ENCODE measurements at regions of chr15 and their contacts with region 1.

Region 1: DNA sequence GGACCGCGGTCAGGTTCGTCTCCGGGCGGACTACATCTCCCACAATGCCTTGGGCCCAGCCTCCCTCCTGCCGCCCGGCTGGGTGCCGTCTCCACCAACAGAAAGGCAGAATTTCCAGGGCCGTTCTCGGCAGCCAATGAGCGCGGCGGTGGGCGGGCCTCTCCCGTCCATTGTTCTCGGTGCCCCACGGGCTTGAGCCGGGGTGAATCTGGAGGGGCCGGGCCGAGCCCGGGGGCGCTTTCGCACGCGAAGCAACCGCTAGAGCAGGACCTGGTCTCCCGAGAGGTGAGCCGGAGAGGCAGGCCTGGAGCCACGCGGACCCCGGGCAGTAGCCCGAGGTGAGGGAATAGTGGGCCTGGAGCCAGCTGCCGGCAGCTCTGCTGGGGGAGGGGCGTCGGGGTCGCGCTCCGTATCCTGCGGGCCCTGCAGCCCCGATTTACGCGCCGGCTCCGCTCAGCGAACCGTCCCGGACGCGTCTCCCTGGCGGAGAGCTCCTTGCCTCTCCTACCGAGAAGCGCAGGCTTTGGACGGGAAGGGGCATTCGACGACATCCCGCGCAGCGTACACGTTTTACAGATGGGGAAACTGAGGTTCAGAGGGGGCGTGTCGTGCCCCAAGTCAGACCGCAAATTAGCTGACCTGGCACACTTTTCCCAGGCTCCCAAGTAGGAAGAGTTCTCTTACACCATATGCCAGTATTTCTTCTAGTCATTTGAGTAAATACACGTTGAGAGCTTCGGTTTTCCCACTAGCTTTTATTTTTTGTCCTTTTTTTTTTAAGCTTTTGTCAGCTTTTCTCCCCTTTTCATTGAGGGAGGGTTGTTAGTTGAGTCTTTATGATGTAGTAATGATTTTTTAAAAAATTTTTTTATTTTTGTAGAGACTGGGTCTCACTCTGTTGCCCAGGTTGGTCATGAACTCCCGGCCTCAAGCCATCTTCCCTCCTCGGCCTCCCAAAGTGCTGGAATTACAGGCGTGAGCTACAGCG is at the start of gene ZSCAN2:
- DNase-seq: peak; percentile 66
- ATAC-seq: peak; percentile 93
- H3K4me3 ChIP-seq: peak within 1 kb of the TSS; percentile 90
- H3K27ac ChIP-seq: peak within 1 kb of the TSS; percentile 27
- H3K4me1 ChIP-seq: peaks cover 42% of the 10 kb centered on the region
- H3K27me3 ChIP-seq: no peaks in the 10 kb centered on the region
- CTCF ChIP-seq: no peak
- EP300 ChIP-seq: peak in 1 of 2 experiments; percentile 32; a peak in 1 of 4 replicates
- POLR2A ChIP-seq: peak; percentile 71
- RAD21 ChIP-seq: no peak
- polyA plus RNA-seq, gene ZSCAN2: 2.7 to 3.0 TPM

Region 2: GRCh38 chr15:84588053-84588874 is 12.9 kb before region 1 on chr15:
- CTCF ChIA-PET with region 1: interaction called, 39 read pairs
- POLR2A ChIA-PET with region 1: no interaction called
- RAD21 ChIA-PET with region 1: interaction called, 5 read pairs
- SMC1A ChIA-PET with region 1: interaction called, 8 read pairs
- in situ Hi-C with region 1: no loop called
- intact Hi-C with region 1: no loop called
- DNase-seq: no peak
- ATAC-seq: peak; percentile 100
- H3K4me3 ChIP-seq: no peak overlapping the region; the same call in 1 of the 2 replicates
- H3K27ac ChIP-seq: no peak overlapping the region
- H3K4me1 ChIP-seq: no peaks in the 10 kb centered on the region
- H3K27me3 ChIP-seq: no peaks in the 10 kb centered on the region; a peak in 2 of 4 replicates
- CTCF ChIP-seq: peak; percentile 43 to 88 (median 72)
- EP300 ChIP-seq: no peak
- POLR2A ChIP-seq: no peak
- RAD21 ChIP-seq: peak; percentile 80

Region 3: DNA sequence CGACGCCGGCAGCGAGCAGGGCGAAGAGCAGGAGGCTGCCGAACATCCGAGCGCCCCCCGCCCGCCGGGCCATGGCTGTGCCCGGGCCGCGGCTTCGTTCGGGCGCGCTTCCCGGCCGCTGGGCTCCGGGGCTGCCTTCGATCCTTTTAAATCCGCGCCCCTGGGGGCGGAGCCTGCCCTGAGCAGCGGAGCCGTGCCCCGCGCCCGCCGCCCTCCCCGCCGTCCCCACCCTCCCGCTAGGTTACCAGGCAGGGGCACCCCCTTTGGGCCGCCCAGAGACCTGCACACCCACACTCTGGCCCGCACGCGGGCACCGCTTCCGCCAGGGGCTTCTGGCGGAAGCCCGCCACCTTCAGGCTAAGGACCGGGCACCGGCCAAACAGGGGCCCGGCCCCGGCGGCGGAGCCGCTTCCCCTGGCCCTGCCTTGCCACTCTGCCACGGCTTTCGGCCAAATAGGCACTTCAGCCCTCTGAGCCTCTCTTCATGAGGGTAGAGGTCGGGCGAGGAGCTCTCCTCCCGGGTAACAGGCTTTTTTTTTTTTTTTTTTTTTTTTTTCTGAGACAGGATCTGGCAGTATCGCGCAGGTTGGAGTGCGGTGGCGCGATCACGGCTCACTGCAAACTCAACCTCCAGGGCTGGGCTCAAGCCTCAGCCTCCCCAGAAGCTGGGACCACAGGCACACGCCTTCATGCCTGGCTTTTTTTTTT is 57.1 kb after region 1 on chr15 and contains the start of gene NMB:
- CTCF ChIA-PET with region 1: interaction called, 52 read pairs
- POLR2A ChIA-PET with region 1: interaction called, 6 read pairs
- RAD21 ChIA-PET with region 1: interaction called, 14 read pairs
- SMC1A ChIA-PET with region 1: interaction called, 8 read pairs
- in situ Hi-C with region 1: no loop called
- intact Hi-C with region 1: loop called (anchors 5 kb)
- DNase-seq: peak; percentile 33
- ATAC-seq: peak; percentile 81
- H3K4me3 ChIP-seq: peak within 1 kb of the TSS; percentile 49; the same call in 1 of the 2 replicates
- H3K27ac ChIP-seq: no peak within 1 kb of the TSS
- H3K4me1 ChIP-seq: peaks cover 19% of the 10 kb centered on the region
- H3K27me3 ChIP-seq: no peaks in the 10 kb centered on the region
- CTCF ChIP-seq: peak; percentile 56 to 66 (median 61)
- EP300 ChIP-seq: no peak
- POLR2A ChIP-seq: no peak
- RAD21 ChIP-seq: peak; percentile 29; the same call in 1 of the 2 replicates
- polyA plus RNA-seq, gene NMB: 0.32 to 0.91 TPM

Region 4: DNA sequence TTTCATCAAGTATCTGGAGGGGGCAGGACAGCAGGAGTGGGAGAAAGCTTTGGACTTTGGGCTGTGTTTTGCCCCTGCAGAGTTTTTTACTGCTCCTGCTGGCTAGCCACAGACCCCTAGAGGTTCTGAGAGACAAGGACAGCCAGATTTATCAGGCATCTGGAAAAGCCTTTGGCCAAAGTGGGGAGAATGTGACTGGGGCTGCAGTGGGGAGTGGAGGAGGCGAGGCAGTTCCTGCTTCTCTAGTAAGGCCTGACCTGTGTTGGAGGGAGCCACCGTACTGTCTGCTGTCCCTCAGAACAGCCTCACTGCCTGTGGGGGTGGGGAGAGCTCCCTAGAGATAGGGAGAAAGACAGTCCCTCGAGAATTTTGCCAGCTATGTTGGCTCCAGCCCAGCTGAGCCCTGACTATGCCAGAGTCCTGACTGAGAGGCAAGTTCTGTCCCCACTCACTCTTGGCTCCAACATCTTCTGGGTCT is 218.2 kb after region 1 on chr15:
- CTCF ChIA-PET with region 1: interaction called, 28 read pairs
- POLR2A ChIA-PET with region 1: no interaction called
- RAD21 ChIA-PET with region 1: interaction called, 8 read pairs
- SMC1A ChIA-PET with region 1: interaction called, 15 read pairs
- in situ Hi-C with region 1: no loop called
- intact Hi-C with region 1: no loop called
- DNase-seq: no peak
- ATAC-seq: 0 out of 3 replicates have a peak, but pooled peaks have one; percentile 12
- H3K4me3 ChIP-seq: no peak overlapping the region
- H3K27ac ChIP-seq: no peak overlapping the region
- H3K4me1 ChIP-seq: no peaks in the 10 kb centered on the region
- H3K27me3 ChIP-seq: no peaks in the 10 kb centered on the region; a peak in 1 of 4 replicates
- CTCF ChIP-seq: no peak
- EP300 ChIP-seq: no peak
- POLR2A ChIP-seq: no peak
- RAD21 ChIP-seq: no peak

Region 5: GRCh38 chr15:84874981-84875699 is 274.0 kb after region 1 on chr15:
- CTCF ChIA-PET with region 1: interaction called, 37 read pairs
- POLR2A ChIA-PET with region 1: interaction called, 5 read pairs
- RAD21 ChIA-PET with region 1: interaction called, 12 read pairs
- SMC1A ChIA-PET with region 1: interaction called, 13 read pairs
- in situ Hi-C with region 1: no loop called
- intact Hi-C with region 1: no loop called
- DNase-seq: no peak
- ATAC-seq: no peak
- H3K4me3 ChIP-seq: no peak overlapping the region
- H3K27ac ChIP-seq: no peak overlapping the region
- H3K4me1 ChIP-seq: no peaks in the 10 kb centered on the region
- H3K27me3 ChIP-seq: no peaks in the 10 kb centered on the region; a peak in 1 of 4 replicates
- CTCF ChIP-seq: no peak
- EP300 ChIP-seq: no peak
- POLR2A ChIP-seq: no peak
- RAD21 ChIP-seq: no peak

Region 6: DNA sequence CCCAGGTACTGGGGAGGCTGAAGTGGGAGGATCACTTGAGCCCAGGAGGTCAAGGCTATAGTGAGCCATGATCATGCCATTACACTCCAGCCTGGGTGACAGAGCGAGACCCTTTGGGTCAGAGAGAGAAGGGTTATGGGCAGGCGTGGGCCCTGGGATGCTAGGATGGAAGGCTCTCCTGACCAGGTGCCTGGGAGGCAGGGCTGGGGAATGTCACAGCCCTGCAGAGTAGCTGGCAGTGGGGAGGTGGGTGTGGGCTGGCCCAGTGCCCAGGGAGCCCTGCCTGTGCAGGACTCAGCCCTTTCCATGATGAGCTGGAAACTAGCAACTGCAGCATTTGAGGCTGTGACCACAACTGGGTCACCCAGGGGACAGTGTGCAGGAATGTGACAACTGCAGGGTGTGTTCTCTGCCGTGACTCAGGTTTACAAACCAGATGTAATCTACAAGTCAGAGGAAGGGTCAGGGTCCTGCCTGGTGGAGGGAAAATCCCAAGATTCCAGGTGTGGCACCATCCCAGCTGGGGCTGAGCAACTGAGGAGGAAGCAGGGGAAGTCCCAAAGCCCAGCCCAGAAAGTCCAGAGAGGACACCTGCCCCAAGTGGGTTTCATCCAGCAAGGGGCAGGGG is 328.7 kb after region 1 on chr15:
- CTCF ChIA-PET with region 1: interaction called, 14 read pairs
- POLR2A ChIA-PET with region 1: no interaction called
- RAD21 ChIA-PET with region 1: interaction called, 15 read pairs
- SMC1A ChIA-PET with region 1: interaction called, 7 read pairs
- in situ Hi-C with region 1: no loop called
- intact Hi-C with region 1: no loop called
- DNase-seq: no peak
- ATAC-seq: no peak
- H3K4me3 ChIP-seq: no peak overlapping the region
- H3K27ac ChIP-seq: no peak overlapping the region
- H3K4me1 ChIP-seq: no peaks in the 10 kb centered on the region
- H3K27me3 ChIP-seq: no peaks in the 10 kb centered on the region
- CTCF ChIP-seq: no peak
- EP300 ChIP-seq: no peak
- POLR2A ChIP-seq: no peak
- RAD21 ChIP-seq: no peak

Measured in GM12878 (cell line).